K562 (cell line): ENCODE measurements at regions of chr3 and their contacts with region 1.

Region 1: DNA sequence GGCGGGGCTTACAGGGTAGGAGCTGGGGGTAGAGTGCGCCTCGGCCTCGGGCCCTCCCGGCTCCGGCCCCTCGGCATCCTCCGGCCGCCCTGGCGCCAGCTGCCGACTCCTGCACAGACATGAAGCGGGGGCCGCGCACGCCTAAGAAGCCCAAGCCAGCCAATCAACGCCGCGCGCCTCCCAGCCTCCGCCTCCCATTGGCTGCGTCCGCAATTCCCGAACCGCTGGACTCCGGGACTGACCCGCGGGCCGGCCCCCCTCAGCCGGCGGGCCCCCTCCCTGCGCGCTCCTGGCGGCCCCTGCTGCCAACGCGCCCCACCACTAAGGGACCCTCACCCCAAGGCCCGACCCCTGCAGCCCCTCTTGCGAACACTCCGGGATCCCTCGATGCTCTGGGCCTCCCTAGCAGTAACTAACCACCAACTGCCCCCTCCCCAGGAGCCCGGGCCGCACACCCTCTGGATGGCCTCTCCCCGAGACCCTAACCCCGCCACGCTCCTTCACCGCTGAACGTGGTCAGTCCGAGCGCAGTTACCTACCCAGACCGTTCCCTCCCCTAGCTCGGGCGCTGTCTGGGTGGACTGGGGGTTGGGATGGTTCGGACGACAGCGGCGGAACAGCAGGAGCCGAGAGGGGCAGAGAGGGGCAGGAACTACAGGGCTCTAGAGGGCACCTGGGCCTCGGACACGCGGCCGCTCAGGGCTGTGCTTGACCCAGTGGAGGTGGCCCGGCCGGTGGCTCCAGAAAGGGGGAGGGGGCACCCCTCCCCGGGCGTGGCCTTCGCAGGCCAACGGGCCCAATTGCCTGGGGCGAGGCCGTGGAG is 5.0 kb downstream of the GATA2 start:
- DNase-seq: peak; percentile 83 to 95 (median 89)
- ATAC-seq: peak; percentile 74
- H3K4me3 ChIP-seq: peak overlapping the region; percentile 98
- H3K27ac ChIP-seq: peak overlapping the region; percentile 98
- H3K4me1 ChIP-seq: peaks cover 5 to 73% of the 10 kb centered on the region in 2 experiments; a peak in 3 of 5 replicates
- H3K27me3 ChIP-seq: no peaks in the 10 kb centered on the region
- CTCF ChIP-seq: no peak
- EP300 ChIP-seq: no peak
- POLR2A ChIP-seq: peak; percentile 88
- RAD21 ChIP-seq: no peak

Region 2: DNA sequence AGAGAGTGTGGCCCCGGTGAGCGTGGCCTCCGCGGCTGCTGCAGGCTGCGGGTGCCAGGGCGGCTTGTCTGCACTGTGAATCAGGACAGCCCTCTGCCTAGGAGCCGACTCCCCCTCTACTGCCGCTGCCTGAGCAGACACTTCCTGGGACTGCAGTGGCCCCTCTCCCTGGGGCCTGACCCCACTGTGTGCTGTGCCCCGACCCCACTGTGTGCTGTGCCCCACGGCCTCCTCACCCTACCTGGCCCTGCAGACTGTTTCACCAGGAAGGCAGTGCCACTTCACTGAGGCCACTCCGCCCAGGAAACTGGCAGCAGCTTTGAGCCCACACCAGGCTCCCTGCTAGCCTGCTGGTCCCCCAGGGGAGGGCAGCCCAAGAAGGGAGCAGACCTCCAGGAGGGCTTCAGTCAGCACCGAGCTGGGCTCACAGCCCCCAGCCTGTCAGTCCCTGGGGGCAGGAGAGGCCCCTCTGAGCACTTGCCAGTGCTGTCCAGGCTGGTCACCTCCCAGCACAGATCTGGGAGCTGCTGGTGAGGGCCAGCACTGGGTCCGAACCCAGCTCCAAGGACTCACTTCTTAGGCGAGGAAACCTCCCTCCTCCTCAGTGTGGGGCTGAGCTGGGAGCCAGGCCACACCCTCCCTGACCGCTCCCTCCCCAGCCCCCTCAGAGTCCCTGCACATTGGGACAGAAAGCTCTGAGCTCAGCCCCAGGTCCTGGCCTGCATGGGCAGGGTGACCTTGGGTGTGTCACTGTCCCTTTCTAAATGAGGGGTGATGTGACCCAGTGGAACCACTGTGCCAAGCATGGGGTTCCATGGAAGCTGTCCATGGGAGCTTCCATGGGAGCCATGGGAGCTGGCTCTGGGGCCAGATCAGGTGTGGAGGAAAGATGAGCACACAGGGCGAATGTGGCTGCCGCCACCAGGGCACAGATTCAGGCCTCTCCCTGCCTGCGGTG is 78.1 kb before region 1 on chr3:
- CTCF ChIA-PET with region 1: no interaction called
- POLR2A ChIA-PET with region 1: interaction called, 4 read pairs
- in situ Hi-C with region 1: no loop called
- intact Hi-C with region 1: loop called (anchors 2 kb)
- DNase-seq: peak; percentile 71 to 90 (median 77)
- ATAC-seq: peak; percentile 86
- H3K4me3 ChIP-seq: peak overlapping the region; percentile 44
- H3K27ac ChIP-seq: peak overlapping the region; percentile 99
- H3K4me1 ChIP-seq: peaks cover 59 to 87% of the 10 kb centered on the region in 2 experiments
- H3K27me3 ChIP-seq: no peaks in the 10 kb centered on the region
- CTCF ChIP-seq: 0 out of 6 replicates have a peak, but pooled peaks of 1 of the 3 experiments have one; percentile 9
- EP300 ChIP-seq: no peak
- POLR2A ChIP-seq: peak; percentile 80
- RAD21 ChIP-seq: no peak

Region 3: GRCh38 chr3:128549283-128550112 is 61.5 kb after region 1 on chr3:
- CTCF ChIA-PET with region 1: no interaction called
- POLR2A ChIA-PET with region 1: interaction called, 4 read pairs
- in situ Hi-C with region 1: no loop called
- intact Hi-C with region 1: loop called (anchors 5 kb)
- DNase-seq: peak; percentile 75 to 91 (median 81)
- ATAC-seq: peak; percentile 71
- H3K4me3 ChIP-seq: peak overlapping the region; percentile 21
- H3K27ac ChIP-seq: peak overlapping the region; percentile 80
- H3K4me1 ChIP-seq: peaks cover 52 to 55% of the 10 kb centered on the region in 2 experiments
- H3K27me3 ChIP-seq: no peaks in the 10 kb centered on the region
- CTCF ChIP-seq: no peak
- EP300 ChIP-seq: peak; percentile 66; the same call in 1 of the 2 replicates
- POLR2A ChIP-seq: no peak
- RAD21 ChIP-seq: no peak